ENCODE measurements at regions of chr17 and their contacts with region 1.

Region 1: GRCh38 chr17:81094509-81095382 is 59.8 kb downstream of the BAIAP2 start:
- DNase-seq: peak; percentile 78 to 85 (median 81)
- H3K4me3 ChIP-seq: no peak overlapping the region
- H3K27ac ChIP-seq: peak overlapping the region; percentile 2 to 81
- H3K4me1 ChIP-seq: peaks cover 10% of the 10 kb centered on the region
- H3K27me3 ChIP-seq: no peaks in the 10 kb centered on the region
- CTCF ChIP-seq: no peak
- EP300 ChIP-seq: no peak
- POLR2A ChIP-seq: no peak

Region 2: DNA sequence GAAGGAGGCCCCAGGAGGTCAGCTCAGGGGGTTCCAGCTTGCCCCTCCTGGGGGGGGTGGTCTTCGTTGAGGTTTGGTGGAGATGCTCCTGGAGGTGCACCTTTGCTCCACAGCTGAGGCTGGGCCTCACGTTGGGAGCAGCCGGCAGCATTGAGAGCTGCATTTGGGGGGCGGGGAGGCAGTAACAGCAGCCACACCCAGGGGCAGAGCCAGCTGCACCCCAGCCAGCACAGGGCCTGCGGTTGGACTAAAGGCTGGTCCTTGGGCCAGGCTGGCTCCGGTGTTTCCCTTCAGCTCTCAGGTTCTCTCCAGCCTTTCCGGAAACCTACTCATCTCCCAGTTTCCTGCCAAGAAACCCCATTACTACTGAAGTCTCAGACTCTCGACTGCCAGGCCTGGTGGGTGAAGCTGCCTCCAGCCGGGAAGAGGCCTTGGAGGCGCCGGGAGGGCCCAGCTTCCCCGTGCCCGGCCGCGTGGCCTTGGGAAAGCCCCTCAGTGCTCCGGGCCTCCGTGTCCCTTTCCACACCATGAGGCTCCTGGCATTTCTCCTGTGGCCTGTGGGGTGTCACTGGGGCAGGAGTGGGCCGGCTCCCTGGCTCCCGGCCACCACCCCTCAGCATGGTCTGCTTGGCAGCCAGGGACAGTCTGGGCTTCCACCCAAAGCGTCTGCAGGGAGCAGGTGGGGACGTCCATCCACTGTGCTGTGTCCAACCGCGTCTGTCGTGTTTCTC is 73.8 kb before region 1 on chr17:
- intact Hi-C with region 1: loop called in 2 of 4 experiments (anchors 5 kb)
- DNase-seq: peak in 4 of 5 donors; percentile 12 to 54 (median 38)
- H3K4me3 ChIP-seq: no peak overlapping the region
- H3K27ac ChIP-seq: no peak overlapping the region
- H3K4me1 ChIP-seq: peaks cover 7% of the 10 kb centered on the region
- H3K27me3 ChIP-seq: no peaks in the 10 kb centered on the region
- CTCF ChIP-seq: no peak
- EP300 ChIP-seq: no peak
- POLR2A ChIP-seq: no peak

Region 3: GRCh38 chr17:81027591-81028505 is 66.9 kb before region 1 on chr17:
- intact Hi-C with region 1: loop called in 2 of 4 experiments (anchors 5 kb)
- DNase-seq: peak in 1 of 5 donors; percentile 51
- H3K4me3 ChIP-seq: no peak overlapping the region
- H3K27ac ChIP-seq: no peak overlapping the region
- H3K4me1 ChIP-seq: no peaks in the 10 kb centered on the region
- H3K27me3 ChIP-seq: no peaks in the 10 kb centered on the region
- CTCF ChIP-seq: no peak
- EP300 ChIP-seq: no peak
- POLR2A ChIP-seq: no peak